PC-9 (cell line): ENCODE measurements at regions of chr1 and their contacts with region 1.

Region 1: DNA sequence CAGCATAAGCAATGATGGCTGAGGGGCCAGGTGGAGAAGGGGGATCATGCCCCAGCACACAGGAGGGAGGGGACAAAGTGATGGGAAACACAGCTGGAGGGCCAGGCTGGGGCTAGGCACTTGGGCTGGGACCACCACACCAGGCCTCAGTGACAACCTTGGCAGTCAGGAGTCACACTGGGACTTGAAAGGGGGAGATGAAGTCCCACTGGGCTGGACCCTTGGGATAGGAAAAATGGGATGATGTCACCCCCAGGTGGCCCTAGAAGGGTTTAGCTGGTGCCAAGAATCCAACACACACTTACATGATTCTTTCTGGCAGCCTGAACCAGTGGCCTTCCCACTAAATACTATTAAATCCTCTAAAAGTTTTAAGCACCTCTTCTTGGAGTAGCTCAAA is 17.1 kb downstream of the ZBTB17 start:
- DNase-seq: no peak
- H3K4me3 ChIP-seq: no peak overlapping the region
- H3K27ac ChIP-seq: no peak overlapping the region
- H3K4me1 ChIP-seq: 0 out of 2 replicates have a peak, but pooled peaks cover 5% of the 10 kb centered on the region
- H3K27me3 ChIP-seq: no peaks in the 10 kb centered on the region
- CTCF ChIP-seq: no peak

Region 2: GRCh38 chr1:15866721-15867201 is 92.0 kb before region 1 on chr1:
- CTCF ChIA-PET with region 1: no interaction called
- POLR2A ChIA-PET with region 1: interaction called, 19 read pairs
- intact Hi-C with region 1: no loop called
- DNase-seq: no peak
- H3K4me3 ChIP-seq: no peak overlapping the region
- H3K27ac ChIP-seq: no peak overlapping the region
- H3K4me1 ChIP-seq: no peaks in the 10 kb centered on the region
- H3K27me3 ChIP-seq: no peaks in the 10 kb centered on the region
- CTCF ChIP-seq: no peak

Region 3: DNA sequence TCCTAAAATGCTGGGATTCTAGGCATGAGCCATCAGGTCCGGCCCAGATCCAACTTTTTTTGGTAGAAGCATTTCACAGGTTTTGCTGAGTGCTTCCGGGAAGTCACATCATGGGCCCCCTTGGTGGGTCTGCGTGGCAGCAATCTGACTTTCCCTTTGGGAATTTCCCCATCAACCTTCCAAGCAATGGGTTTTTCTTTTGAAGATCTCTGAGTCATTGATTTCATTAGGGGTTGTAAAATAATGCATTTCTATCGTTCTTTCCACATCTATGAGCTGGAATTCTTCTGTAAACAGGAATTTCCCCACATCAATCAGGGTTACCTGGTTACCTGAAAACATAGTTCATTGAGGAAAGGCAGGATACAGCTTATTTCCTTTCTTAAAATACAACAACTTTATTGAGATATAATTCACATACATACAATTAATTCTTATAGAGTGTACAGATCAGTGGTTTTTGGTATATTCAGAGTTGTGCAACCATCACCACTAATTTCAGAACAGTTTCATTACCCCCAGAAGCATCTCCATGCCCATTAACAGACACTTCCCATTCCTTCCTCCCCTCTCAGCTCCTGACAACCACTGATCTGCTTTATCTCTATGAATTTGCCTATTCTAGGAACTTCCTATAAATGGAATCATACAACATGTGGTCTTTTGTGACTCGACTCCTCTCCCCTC is 27.0 kb after region 1 on chr1:
- CTCF ChIA-PET with region 1: no interaction called
- POLR2A ChIA-PET with region 1: interaction called, 29 read pairs
- intact Hi-C with region 1: no loop called
- DNase-seq: peak in 1 of 2 experiments; percentile 71
- H3K4me3 ChIP-seq: no peak overlapping the region
- H3K27ac ChIP-seq: no peak overlapping the region
- H3K4me1 ChIP-seq: no peaks in the 10 kb centered on the region
- H3K27me3 ChIP-seq: no peaks in the 10 kb centered on the region
- CTCF ChIP-seq: no peak

Region 4: GRCh38 chr1:16342331-16343062 is 383.7 kb after region 1 on chr1:
- CTCF ChIA-PET with region 1: no interaction called
- POLR2A ChIA-PET with region 1: no interaction called
- intact Hi-C with region 1: no loop called
- DNase-seq: no peak
- H3K4me3 ChIP-seq: no peak overlapping the region
- H3K27ac ChIP-seq: no peak overlapping the region
- H3K4me1 ChIP-seq: no peaks in the 10 kb centered on the region
- H3K27me3 ChIP-seq: no peaks in the 10 kb centered on the region
- CTCF ChIP-seq: no peak